Lower leg skin (tissue), 4 donors: ENCODE measurements at regions of chr6 and their contacts with region 1.

Region 1: GRCh38 chr6:35522660-35523658 is 10.3 kb upstream of the TULP1 start:
- DNase-seq: peak; percentile 68 to 95
- H3K4me3 ChIP-seq: no peak overlapping the region
- CTCF ChIP-seq: peak in 1 of 3 donors; percentile 74
- POLR2A ChIP-seq: no peak

Region 2: GRCh38 chr6:35412102-35412501 is 110.9 kb before region 1 on chr6:
- intact Hi-C with region 1: loop called (anchors 1 kb)
- DNase-seq: no peak
- H3K4me3 ChIP-seq: no peak overlapping the region
- CTCF ChIP-seq: no peak
- POLR2A ChIP-seq: no peak